Common myeloid progenitor, CD34-positive (primary cell): ENCODE measurements at regions of chr16 and their contacts with region 1.

Region 1: DNA sequence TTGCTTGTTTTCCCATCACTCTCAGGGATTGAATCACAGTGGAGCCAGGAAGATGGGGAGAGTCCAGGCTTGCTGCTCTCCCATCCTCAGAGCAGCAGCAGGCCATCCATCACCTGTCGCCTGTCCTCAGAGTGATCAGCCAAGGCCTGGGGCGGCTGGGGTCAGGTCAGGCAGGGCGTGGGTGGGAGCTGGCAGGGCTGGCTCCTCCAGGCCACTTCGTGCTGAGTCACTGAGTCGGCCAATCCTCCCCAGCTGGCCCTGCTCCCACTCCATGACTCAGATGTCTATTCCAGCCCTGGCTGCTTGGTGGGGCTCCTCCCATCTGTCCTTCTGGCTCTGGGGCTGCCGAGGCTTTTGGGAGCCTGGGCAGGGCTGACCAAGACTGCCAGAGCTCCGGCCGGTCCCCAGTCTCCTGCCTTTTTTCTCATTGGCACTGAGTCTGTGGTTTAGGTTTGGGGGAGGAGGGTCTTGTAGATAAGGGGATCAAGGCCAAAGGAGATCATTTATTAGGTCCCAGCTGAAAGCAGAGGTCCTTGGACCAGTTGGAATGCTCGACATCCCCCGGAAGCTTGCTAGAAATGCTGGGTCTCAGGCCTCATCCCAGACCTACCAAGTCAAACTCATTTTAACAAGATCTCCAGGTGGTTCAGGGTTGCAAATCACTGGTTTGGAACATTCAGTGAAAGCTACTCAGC is 72.7 kb downstream of the ABCC1 start:
- DNase-seq: peak; percentile 55 to 89 (median 88)
- H3K4me3 ChIP-seq: peak overlapping the region in 3 of 7 experiments; percentile 0 to 48 (median 2)
- H3K27ac ChIP-seq: peak overlapping the region; percentile 55 to 85
- H3K4me1 ChIP-seq: peaks cover 5 to 47% (median 34%) of the 10 kb centered on the region in 4 experiments
- H3K27me3 ChIP-seq: no peaks in the 10 kb centered on the region

Region 2: DNA sequence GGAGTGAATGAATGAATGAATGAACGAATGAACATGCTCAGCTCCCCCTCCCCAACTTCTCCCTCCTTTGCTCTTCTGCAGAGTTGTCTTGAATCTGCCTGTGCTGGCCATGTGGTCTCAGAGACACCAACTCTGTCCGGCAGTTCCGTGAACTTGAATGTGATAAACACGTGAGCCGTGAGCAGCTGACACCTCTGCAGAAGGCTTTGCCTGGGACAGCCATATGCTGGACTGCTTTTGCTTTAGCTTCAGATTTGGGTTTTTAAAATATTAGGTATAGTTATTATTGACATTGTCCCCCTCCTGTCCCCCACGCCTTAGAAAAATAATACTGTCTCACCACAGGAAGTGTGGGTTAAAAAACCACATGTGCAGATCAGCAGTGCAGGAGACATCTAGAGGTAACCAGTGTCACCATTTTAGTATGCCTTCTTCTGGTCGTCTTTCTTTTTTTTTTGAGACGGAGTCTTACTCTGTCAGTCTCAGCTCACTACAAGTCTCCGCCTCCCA is 11.1 kb after region 1 on chr16:
- CTCF ChIA-PET with region 1: interaction called, 28 read pairs
- POLR2A ChIA-PET with region 1: no interaction called
- DNase-seq: peak; percentile 47 to 77 (median 72)
- H3K4me3 ChIP-seq: peak overlapping the region in 1 of 7 experiments; percentile 44
- H3K27ac ChIP-seq: peak overlapping the region in 1 of 2 experiments; percentile 15
- H3K4me1 ChIP-seq: peaks cover 6 to 36% (median 27%) of the 10 kb centered on the region in 4 experiments
- H3K27me3 ChIP-seq: no peaks in the 10 kb centered on the region

Region 3: DNA sequence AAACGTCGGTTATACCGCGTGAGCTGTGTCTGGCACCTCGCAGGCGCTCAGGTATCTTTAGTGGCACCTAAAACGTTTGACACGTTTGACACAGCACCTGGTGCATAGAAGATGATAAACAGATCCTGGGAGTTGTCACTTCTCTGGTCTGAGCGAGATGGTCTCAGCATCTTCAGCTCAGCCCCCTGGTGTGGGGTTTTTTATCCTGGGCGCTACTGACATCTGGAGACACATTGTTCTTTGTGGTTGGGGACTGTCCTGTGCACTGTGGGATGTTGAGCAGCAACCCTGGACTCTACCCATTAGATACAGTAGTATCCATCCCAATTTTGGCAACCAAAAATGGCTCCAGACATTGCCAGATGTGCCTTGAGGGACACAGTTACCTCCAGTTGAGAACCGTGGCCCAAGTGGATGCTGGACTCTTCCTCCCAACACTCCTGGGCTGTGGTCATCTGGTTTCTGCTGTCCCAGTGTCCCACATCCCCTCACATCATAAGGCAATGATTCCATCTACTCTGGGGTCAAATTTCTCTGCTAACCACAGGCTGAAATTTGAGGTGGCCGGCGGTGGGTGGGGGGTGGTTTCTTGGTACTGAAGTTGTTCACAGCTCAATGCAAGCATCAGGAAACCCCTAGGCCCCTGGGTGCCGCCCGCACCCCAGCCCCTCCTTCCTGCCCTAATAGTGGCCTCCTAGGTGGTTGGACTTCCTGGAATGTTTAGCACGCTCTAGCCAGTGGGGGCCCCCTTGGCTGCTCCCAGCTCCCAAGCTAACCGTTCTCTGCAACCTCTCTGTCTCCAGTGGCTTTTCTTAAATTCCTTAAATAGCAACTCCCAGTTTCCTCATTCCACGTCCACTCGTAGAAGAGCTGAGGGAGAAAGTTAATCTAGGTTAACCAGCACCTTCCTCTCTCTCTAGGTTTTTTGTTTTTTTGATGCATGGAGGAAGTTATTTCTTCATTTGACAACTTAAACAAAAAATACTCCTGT is 52.1 kb after region 1 on chr16:
- CTCF ChIA-PET with region 1: no interaction called
- POLR2A ChIA-PET with region 1: no interaction called
- DNase-seq: peak; percentile 65 to 91 (median 84)
- H3K4me3 ChIP-seq: peak overlapping the region in 2 of 7 experiments; percentile 17 to 30
- H3K27ac ChIP-seq: peak overlapping the region; percentile 79 to 84
- H3K4me1 ChIP-seq: peaks cover 14 to 81% (median 67%) of the 10 kb centered on the region in 4 experiments
- H3K27me3 ChIP-seq: no peaks in the 10 kb centered on the region